ENCODE measurements at regions of chrX and their contacts with region 1.

Region 1: GRCh38 chrX:130702867-130703707 is 199.9 kb downstream of the ENOX2 start:
- DNase-seq: no peak
- H3K4me3 ChIP-seq: no peak overlapping the region
- H3K27ac ChIP-seq: no peak overlapping the region
- H3K4me1 ChIP-seq: no peaks in the 10 kb centered on the region
- CTCF ChIP-seq: no peak

Region 2: DNA sequence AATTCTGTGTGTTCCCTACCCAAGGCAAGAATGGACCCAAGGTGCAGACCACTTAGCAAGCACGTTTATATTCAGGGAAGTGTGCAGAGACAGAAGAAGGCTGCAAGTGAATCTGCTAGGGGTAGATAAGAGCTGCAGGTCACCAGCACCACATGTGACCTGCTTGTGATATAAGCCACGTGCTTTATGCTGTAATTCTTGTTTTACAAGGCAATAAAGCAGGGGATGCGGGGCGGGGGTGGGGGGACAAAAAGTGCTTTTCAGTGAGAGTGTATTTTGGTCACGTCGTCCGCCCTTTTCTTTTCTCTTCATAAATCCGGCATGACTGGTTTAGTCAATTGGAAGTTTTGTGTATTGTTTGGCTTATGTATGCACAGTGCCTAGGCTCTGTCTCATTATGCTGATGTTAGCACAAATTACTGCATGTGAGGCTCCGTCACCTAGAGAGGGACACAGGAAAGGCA is 108.6 kb before region 1 on chrX:
- CTCF ChIA-PET with region 1: no interaction called
- POLR2A ChIA-PET with region 1: no interaction called
- intact Hi-C with region 1: no loop called
- DNase-seq: no peak
- H3K4me3 ChIP-seq: no peak overlapping the region
- H3K27ac ChIP-seq: no peak overlapping the region
- H3K4me1 ChIP-seq: no peaks in the 10 kb centered on the region
- CTCF ChIP-seq: no peak

Region 3: DNA sequence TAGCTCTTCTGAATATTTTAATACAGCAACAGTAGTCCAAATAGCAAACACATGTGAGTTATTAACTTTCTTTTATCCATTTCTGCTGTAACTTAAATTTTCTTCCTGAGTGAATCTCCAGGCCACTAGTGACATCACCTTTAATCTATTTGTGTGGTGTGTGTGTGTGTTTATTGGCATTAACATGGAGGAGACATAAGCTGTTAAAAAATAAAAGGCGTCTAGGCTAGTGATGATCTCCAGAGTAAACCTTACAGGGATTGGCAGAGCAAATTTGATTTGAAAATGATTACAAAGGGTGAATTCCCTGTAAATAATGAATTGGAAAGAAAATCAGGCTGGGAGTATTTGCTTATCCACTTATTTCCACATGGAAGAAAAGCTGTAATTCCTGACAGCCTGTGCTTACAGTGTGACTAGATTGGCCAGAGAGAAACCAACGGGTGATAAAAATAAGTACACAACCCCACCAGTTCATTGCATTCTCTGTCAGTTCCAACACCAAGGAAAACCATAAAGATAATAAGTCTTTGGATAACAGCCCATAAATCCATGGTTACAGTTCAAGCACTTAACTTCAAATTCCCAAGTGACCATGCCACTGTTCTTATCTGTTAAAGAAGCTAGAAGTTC is 13.8 kb after region 1 on chrX:
- CTCF ChIA-PET with region 1: interaction called, 3 read pairs
- POLR2A ChIA-PET with region 1: interaction called, 10 read pairs
- intact Hi-C with region 1: no loop called
- DNase-seq: no peak
- H3K4me3 ChIP-seq: no peak overlapping the region
- H3K27ac ChIP-seq: no peak overlapping the region
- H3K4me1 ChIP-seq: no peaks in the 10 kb centered on the region
- CTCF ChIP-seq: no peak

Region 4: DNA sequence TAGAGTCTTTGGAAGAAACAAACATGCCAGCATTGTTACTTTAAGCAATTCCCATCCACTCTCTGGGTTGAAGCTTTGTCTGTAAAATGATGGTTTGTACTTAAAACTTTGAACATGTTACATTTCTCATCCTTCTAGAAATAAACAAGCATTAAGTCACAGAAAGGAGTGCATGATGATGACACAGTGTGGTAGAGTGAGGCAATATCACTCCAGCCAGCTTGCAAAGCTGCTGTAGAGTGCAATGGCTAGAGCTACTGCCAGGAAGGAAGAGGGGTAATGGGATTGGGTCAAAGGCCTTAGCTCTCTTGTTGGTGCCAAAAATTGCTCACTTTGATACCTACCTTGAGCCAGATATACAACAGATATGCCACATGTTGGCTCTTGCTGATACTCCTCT is 212.2 kb after region 1 on chrX:
- CTCF ChIA-PET with region 1: no interaction called
- POLR2A ChIA-PET with region 1: no interaction called
- intact Hi-C with region 1: no loop called
- DNase-seq: no peak
- H3K4me3 ChIP-seq: no peak overlapping the region
- H3K27ac ChIP-seq: no peak overlapping the region
- H3K4me1 ChIP-seq: no peaks in the 10 kb centered on the region
- CTCF ChIP-seq: no peak